ENCODE measurements at regions of chr20 and their contacts with region 1.

Region 1: DNA sequence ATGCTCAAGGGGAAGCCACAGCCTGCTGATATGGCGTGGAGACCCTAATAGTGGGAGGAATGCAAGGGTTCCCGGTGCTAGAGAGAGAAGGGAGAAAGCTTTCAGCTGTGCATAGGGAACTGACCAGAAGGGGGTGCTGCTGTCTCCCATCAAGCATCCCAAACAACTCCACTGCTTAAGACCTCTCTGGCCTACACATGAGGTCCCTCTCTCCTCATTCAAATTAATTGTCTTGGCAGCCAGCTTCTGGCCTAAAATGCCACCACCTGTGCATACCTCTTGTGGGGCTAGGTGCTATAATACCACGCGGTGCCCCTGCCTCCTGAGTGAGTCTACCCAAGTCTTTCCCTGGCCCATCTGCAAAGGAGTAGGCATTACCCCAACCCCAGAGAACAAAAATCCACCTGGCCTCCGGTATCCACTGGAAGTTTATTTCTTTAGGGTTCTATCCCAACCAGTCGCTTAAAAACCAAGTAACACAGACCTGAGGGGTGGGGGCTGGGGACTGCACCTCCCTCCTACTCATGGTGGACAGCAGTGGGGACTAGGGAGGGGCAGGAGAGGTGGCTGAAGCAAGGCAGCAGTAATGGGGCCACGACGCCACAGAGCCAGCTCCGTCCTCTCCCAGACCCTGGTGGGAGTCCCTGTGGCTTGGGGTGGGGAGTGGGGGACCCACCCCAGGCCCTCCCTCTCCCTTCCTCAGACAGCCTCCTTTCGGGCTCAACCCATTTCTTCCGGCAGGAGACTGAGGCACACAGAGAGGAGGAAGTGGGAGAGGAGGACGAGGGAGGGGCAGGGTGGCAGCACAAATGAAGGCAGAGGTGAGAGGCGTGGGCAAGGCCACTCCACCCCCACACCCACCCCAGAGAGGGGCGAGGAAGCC is 14.2 kb downstream of the ADISSP start:
- DNase-seq: peak in 1 of 2 experiments; percentile 84
- H3K4me3 ChIP-seq: no peak overlapping the region
- H3K27ac ChIP-seq: no peak overlapping the region
- H3K4me1 ChIP-seq: peaks cover 0 to 17% (median 4%) of the 10 kb centered on the region in 4 experiments; a peak in 5 of 7 replicates
- H3K27me3 ChIP-seq: peaks cover 4 to 22% (median 17%) of the 10 kb centered on the region in 4 experiments
- CTCF ChIP-seq: peak; percentile 78 to 97 (median 80)
- EP300 ChIP-seq: no peak
- POLR2A ChIP-seq: peak in 1 of 2 experiments; percentile 49; a peak in 2 of 3 replicates
- RAD21 ChIP-seq: peak; percentile 69 to 75

Region 2: DNA sequence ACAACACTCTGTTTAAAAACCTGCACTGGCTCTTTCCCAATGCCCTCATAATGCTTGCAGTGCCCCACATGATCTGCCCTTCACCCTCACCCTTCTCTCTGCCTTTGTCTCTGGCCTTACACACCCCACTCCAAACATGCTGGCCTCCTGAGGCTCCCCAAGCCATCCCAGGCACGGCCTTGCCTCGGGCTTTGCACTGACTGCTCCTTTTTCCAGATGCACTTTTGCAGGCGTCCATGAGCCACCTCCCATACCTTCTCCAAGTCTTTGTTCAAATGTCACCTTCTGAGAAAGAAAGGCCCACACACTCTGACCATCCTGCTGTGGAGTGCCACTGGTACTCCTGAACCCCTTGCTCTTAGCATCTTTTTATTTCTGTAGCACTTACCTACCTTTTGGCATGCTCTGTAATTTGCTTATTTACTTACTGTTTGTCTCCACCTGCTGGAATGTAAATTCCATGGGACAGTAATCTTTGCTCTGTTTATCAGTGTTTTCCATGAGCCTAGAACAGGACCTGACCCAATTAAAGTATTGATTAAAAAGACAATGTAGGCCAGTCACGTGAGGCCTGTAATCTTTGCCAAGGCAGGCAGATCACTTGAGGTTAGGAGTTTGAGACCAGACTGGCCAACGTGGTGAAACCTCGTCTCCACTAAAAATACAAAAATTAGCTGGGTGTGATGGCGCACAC is 120.9 kb before region 1 on chr20:
- CTCF ChIA-PET with region 1: no interaction called
- POLR2A ChIA-PET with region 1: no interaction called
- DNase-seq: no peak
- H3K4me3 ChIP-seq: no peak overlapping the region
- H3K27ac ChIP-seq: no peak overlapping the region
- H3K4me1 ChIP-seq: peaks cover 0 to 6% (median 0%) of the 10 kb centered on the region in 4 experiments; a peak in 2 of 7 replicates
- H3K27me3 ChIP-seq: no peaks in the 10 kb centered on the region
- CTCF ChIP-seq: peak in 1 of 3 experiments; percentile 18; a peak in 1 of 4 replicates
- EP300 ChIP-seq: no peak
- POLR2A ChIP-seq: no peak
- RAD21 ChIP-seq: peak; percentile 28 to 36

Region 3: GRCh38 chr20:3652676-3653596 is 100.4 kb before region 1 on chr20:
- CTCF ChIA-PET with region 1: no interaction called
- POLR2A ChIA-PET with region 1: no interaction called
- DNase-seq: no peak
- H3K4me3 ChIP-seq: no peak overlapping the region
- H3K27ac ChIP-seq: no peak overlapping the region
- H3K4me1 ChIP-seq: no peaks in the 10 kb centered on the region; a peak in 1 of 7 replicates
- H3K27me3 ChIP-seq: no peaks in the 10 kb centered on the region
- CTCF ChIP-seq: no peak
- EP300 ChIP-seq: no peak
- POLR2A ChIP-seq: no peak
- RAD21 ChIP-seq: peak in 1 of 2 experiments; percentile 12; a peak in 1 of 4 replicates

Region 4: GRCh38 chr20:3670511-3670910 is 82.8 kb before region 1 on chr20:
- CTCF ChIA-PET with region 1: interaction called, 35 read pairs
- POLR2A ChIA-PET with region 1: interaction called, 3 read pairs
- DNase-seq: no peak
- H3K4me3 ChIP-seq: no peak overlapping the region
- H3K27ac ChIP-seq: no peak overlapping the region
- H3K4me1 ChIP-seq: peaks cover 0 to 10% (median 3%) of the 10 kb centered on the region in 4 experiments; a peak in 4 of 7 replicates
- H3K27me3 ChIP-seq: peaks cover 6 to 25% (median 19%) of the 10 kb centered on the region in 4 experiments; a peak in 6 of 7 replicates
- CTCF ChIP-seq: peak; percentile 40 to 58 (median 58); a peak in 3 of 4 replicates
- EP300 ChIP-seq: no peak
- POLR2A ChIP-seq: no peak
- RAD21 ChIP-seq: peak; percentile 25 to 43; a peak in 3 of 4 replicates

Region 5: DNA sequence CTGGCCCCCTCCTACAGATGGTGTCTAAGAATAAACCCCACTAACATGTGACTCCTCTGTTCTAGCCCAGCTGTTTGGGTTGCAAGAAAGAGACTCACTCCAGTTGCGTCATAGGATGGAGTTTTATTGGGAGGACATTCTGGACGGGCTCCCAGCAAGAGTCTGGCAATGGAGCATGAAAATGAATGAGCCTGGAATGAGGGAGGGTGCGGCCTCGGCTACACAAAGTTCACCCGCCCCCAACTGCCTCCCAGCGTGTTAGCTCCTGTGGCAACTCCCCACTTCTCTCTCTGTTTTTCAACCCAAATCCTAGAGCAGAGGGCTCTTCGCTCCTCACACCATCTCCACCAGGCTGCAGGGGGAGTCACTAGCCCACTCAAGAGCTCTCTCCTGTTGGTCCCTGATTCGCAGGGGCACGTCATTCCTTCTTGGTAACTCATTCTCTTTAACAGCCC is 66.4 kb before region 1 on chr20:
- CTCF ChIA-PET with region 1: interaction called, 21 read pairs
- POLR2A ChIA-PET with region 1: interaction called, 5 read pairs
- DNase-seq: no peak
- H3K4me3 ChIP-seq: no peak overlapping the region
- H3K27ac ChIP-seq: no peak overlapping the region
- H3K4me1 ChIP-seq: peaks cover 3 to 10% (median 5%) of the 10 kb centered on the region in 4 experiments
- H3K27me3 ChIP-seq: peaks cover 0 to 9% (median 7%) of the 10 kb centered on the region in 4 experiments; a peak in 6 of 7 replicates
- CTCF ChIP-seq: peak; percentile 5 to 14 (median 8); a peak in 3 of 4 replicates
- EP300 ChIP-seq: no peak
- POLR2A ChIP-seq: no peak
- RAD21 ChIP-seq: peak in 1 of 2 experiments; percentile 42; a peak in 2 of 4 replicates

Region 6: GRCh38 chr20:3710703-3711483 is 42.4 kb before region 1 on chr20:
- CTCF ChIA-PET with region 1: interaction called, 308 read pairs
- POLR2A ChIA-PET with region 1: interaction called, 3 read pairs
- DNase-seq: peak; percentile 33 to 99
- H3K4me3 ChIP-seq: no peak overlapping the region
- H3K27ac ChIP-seq: no peak overlapping the region
- H3K4me1 ChIP-seq: no peaks in the 10 kb centered on the region
- H3K27me3 ChIP-seq: no peaks in the 10 kb centered on the region; a peak in 1 of 7 replicates
- CTCF ChIP-seq: peak; percentile 88 to 98 (median 91)
- EP300 ChIP-seq: no peak
- POLR2A ChIP-seq: no peak
- RAD21 ChIP-seq: peak; percentile 88 to 93

Region 7: DNA sequence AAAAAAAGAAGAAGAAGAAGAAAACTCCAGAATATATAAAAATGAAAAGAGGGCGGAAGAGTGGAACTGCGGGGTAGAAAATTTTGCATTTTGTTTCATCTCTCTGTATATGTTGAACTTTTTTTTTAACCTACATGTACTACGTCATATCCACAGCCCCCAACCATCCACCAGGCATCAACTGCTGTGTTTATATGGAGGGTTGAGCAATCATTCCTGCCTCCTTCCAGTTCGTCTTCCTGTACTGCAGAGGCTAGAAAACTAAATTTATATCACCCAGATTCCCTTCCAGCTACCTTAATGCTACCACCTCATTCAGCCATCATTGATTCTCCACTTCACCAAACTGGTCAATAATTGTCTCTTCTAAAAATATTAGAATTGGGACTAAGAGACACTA is 31.4 kb before region 1 on chr20:
- CTCF ChIA-PET with region 1: interaction called, 308 read pairs
- POLR2A ChIA-PET with region 1: interaction called, 4 read pairs
- DNase-seq: no peak
- H3K4me3 ChIP-seq: no peak overlapping the region
- H3K27ac ChIP-seq: no peak overlapping the region
- H3K4me1 ChIP-seq: no peaks in the 10 kb centered on the region
- H3K27me3 ChIP-seq: no peaks in the 10 kb centered on the region
- CTCF ChIP-seq: no peak
- EP300 ChIP-seq: no peak
- POLR2A ChIP-seq: no peak
- RAD21 ChIP-seq: no peak

Region 8: GRCh38 chr20:3767427-3768341 is 14.3 kb after region 1 on chr20 and contains the start of gene ADISSP:
- CTCF ChIA-PET with region 1: interaction called, 277 read pairs
- POLR2A ChIA-PET with region 1: interaction called, 46 read pairs
- DNase-seq: peak; percentile 97
- H3K4me3 ChIP-seq: peak within 1 kb of the TSS; percentile 74 to 94 (median 88)
- H3K27ac ChIP-seq: peak within 1 kb of the TSS; percentile 66; the same call in 1 of the 2 replicates
- H3K4me1 ChIP-seq: peaks cover 3 to 15% (median 6%) of the 10 kb centered on the region in 4 experiments; a peak in 6 of 7 replicates
- H3K27me3 ChIP-seq: no peaks in the 10 kb centered on the region
- CTCF ChIP-seq: peak in 2 of 3 experiments; percentile 13 to 35; a peak in 2 of 4 replicates
- EP300 ChIP-seq: no peak
- POLR2A ChIP-seq: peak in 1 of 2 experiments; percentile 71; a peak in 2 of 3 replicates
- RAD21 ChIP-seq: no peak
- total RNA-seq, gene ADISSP: 111 and 117 TPM in 2 replicates

Region 9: DNA sequence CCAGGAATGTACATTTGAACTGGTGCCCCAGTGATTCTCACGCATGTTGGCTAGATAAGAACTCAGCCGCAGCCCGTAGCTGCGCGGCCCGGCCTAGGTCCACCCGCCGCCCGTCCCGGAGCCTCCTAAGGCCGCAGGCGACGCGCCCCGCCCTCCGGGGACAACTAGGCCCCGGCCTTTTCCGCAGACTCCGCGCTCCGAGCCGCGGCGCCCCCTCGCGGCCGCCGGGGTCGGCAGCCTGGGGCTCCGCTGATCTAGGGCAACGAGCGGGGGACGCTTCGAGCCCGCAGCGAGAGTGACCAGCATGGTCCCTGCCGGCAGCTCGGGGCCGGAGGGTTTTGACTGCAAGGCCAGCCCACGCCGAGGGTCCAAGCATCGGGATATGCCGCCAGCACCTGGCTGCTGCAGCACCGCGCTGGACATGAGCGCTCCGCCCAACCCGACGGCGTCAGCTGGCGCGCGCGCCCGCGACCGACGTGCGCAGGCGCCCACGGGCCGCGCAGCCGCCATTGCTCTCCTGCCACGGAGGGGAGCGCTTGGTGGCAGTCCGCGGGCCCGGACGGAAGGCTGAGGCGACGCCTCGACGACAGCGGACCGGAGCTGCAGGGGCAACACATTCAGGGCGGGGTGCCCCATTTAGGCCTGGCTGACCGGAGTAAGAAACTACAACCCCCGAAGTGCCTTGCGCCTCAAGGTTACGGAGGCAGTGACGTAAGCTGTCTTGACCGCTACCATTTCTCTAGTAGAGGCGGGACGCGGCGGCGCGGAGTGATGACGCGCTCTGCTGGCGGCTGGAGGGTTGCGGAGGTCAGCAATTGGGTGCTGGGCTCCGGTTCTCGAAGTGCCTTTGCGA is 66.9 kb after region 1 on chr20 and contains the start of gene AP5S1:
- CTCF ChIA-PET with region 1: interaction called, 22 read pairs
- POLR2A ChIA-PET with region 1: interaction called, 3 read pairs
- DNase-seq: peak; percentile 89 to 98
- H3K4me3 ChIP-seq: peak within 1 kb of the TSS; percentile 79 to 96 (median 90)
- H3K27ac ChIP-seq: peak within 1 kb of the TSS; percentile 92
- H3K4me1 ChIP-seq: peaks cover 0 to 13% (median 5%) of the 10 kb centered on the region in 4 experiments; a peak in 4 of 7 replicates
- H3K27me3 ChIP-seq: no peaks in the 10 kb centered on the region
- CTCF ChIP-seq: peak; percentile 83 to 96 (median 88)
- EP300 ChIP-seq: peak in 1 of 2 experiments; percentile 36; a peak in 1 of 3 replicates
- POLR2A ChIP-seq: peak; percentile 76 to 83
- RAD21 ChIP-seq: peak; percentile 69 to 81
- total RNA-seq, gene AP5S1: 3.4 and 3.7 TPM in 2 replicates

Measured in H1 (cell line).